Right ventricle myocardium inferior (tissue), 1 donor: ENCODE measurements at regions of chr7 and their contacts with region 1.

Region 1: GRCh38 chr7:49776994-49777393 is 3.6 kb downstream of the VWC2 start:
- DNase-seq: no peak
- ATAC-seq: no peak

Region 2: GRCh38 chr7:49635800-49636199 is 141.2 kb before region 1 on chr7:
- intact Hi-C with region 1: loop called (anchors 2 kb)
- DNase-seq: no peak
- ATAC-seq: no peak

Region 3: DNA sequence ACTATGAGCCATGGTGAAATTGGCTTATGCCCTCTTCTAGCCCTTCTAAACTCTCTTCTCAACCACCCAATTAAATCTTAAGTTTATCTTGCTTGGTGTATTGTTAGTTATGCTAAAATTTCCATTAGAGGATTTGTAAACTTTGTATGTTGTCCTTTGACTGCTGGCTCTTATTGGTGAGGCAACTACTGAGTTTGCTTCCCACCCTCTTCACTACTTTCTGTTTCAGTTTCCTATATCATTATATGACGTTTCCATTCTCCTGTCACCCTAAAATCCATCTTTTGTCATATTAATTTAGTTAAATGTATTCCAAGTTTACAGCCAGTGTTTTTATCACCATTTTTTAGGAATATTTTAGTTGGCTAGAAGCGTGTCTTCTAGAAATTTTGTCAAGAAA is 84.5 kb before region 1 on chr7:
- intact Hi-C with region 1: no loop called
- DNase-seq: no peak
- ATAC-seq: no peak

Region 4: DNA sequence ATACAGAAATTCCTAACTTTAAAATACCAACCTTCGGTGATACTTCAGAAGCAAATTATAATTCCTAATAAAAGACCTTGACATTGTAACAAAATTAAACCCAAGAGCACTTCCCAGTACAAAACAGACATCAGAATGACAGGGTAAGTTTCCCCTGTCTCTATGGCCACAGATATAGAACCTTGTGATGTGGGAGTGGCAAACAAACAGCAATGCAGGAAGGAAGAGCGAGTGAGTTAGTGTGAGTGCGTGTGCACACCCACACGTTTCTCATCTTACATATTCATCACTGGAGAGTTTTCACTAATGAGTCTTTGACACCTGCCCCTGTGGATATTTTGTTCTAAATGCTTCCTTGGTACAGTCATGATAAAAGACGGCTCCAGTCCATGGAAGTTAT is 68.6 kb after region 1 on chr7:
- intact Hi-C with region 1: no loop called
- DNase-seq: no peak
- ATAC-seq: peak; percentile 57

Region 5: GRCh38 chr7:49911909-49912308 is 134.9 kb after region 1 on chr7:
- intact Hi-C with region 1: no loop called
- DNase-seq: no peak
- ATAC-seq: no peak